Heart right ventricle (tissue), 16 donors: ENCODE measurements at regions of chr10 and their contacts with region 1.

Region 1: DNA sequence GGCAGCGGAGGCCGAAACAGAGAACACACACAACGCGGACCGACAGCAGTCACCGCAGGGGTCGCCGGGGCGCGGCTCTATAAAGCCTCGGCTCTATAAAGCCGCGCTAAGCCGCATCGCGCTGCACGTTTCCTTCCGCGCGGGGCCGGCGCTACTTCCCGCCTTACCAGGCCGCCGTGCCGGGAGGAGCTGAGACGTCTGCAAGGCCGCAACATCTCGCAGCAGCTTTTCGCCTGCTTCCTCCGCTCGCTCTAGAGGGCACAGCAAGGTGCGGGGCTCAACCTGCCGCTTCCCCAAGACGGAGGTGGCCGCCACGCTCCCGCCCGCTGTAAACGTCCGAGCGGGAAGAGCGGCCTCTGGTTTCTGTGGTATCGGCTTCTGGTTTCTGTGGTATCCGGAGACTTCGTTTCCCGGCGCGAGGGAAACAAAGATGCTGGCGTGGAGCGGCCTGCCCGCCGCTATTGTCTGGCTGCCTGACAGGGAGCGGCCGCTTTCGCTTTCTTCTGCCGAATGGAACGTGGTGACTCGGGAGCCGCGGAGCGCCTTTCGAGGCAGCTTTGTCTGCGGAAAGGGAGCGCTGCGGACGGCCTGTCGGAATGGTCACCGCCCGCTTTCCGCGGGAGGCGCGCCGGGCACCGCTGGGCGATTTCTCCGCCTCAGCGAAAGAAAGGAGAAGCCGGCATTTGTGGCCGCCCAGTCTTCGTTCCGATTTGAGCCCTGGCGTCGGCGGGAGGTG is 91.8 kb downstream of the SPAG6 start:
- DNase-seq: peak; percentile 92 to 93
- ATAC-seq: peak; percentile 94 to 98 (median 97)
- H3K4me3 ChIP-seq: peak overlapping the region; percentile 65 to 88 (median 78)
- H3K27ac ChIP-seq: peak overlapping the region; percentile 91 to 98 (median 95)
- H3K4me1 ChIP-seq: peaks cover 0 to 29% (median 20%) of the 10 kb centered on the region in 9 donors
- H3K27me3 ChIP-seq: peaks cover 0 to 15% (median 0%) of the 10 kb centered on the region in 7 donors
- CTCF ChIP-seq: peak in 5 of 9 donors; percentile 3 to 49 (median 22)

Region 2: DNA sequence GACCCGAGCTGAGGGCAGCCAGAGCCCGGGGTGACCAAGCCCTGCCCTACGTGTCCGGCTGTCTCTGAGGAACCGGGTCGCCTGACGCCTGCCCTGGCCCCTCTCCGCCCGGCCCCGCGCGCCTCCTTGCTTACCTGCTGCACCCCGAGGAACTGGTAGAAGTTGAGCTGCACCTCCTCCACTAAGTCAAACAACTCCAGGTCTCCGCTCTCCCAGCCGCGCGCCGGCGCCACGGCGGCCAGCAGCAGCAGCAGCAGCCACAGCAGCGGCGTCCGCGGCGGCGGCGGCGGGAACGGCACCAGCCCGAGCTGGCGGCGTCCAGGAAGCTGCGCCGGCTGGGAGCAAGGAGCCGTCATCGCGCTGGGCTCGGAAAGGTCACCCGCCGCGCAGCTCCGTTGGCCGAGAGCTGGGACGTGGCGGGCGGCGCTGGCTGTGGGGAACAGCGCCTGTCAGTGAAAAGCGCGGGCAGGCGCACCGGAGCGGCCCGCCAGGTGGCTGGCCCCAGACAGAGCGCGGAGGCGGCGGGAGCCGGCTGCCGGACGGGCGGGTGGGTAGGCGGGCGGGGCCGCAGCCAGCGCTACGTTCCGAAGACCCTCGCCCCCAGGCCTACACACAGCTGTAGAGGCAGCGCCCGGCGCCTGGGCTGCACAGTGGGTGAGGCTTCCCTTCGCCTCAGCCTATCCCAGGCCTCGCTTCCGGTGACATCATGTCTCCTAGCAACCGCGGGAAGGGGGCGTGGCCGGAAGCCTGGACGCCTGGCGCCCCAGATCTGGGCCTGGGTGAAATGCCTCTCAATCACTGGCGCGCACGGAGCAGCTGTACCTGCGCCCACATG is 433.8 kb before region 1 on chr10 and contains the start of gene DNAJC1:
- intact Hi-C with region 1: loop called in 7 of 10 experiments (anchors 10 kb)
- DNase-seq: peak; percentile 98 to 99
- ATAC-seq: peak; percentile 99 to 100 (median 100)
- H3K4me3 ChIP-seq: peak within 1 kb of the TSS; percentile 52 to 94 (median 80)
- H3K27ac ChIP-seq: peak within 1 kb of the TSS; percentile 72 to 98 (median 94)
- H3K4me1 ChIP-seq: peaks cover 0 to 28% (median 16%) of the 10 kb centered on the region in 9 donors
- H3K27me3 ChIP-seq: no peaks in the 10 kb centered on the region
- CTCF ChIP-seq: peak in 4 of 9 donors; percentile 5 to 21 (median 11)
- total RNA-seq, gene DNAJC1: 8.9 to 18.1 (median 11.4) TPM

Region 3: GRCh38 chr10:22316285-22317120 is 120.5 kb before region 1 on chr10 and contains the start of gene COMMD3:
- intact Hi-C with region 1: loop called in 1 of 10 experiments (anchors 2 kb)
- DNase-seq: peak; percentile 89 to 91
- ATAC-seq: peak; percentile 91 to 96 (median 93)
- H3K4me3 ChIP-seq: peak within 1 kb of the TSS; percentile 83 to 96 (median 90)
- H3K27ac ChIP-seq: peak within 1 kb of the TSS; percentile 85 to 96 (median 94)
- H3K4me1 ChIP-seq: peaks cover 0 to 44% (median 35%) of the 10 kb centered on the region in 9 donors
- H3K27me3 ChIP-seq: no peaks in the 10 kb centered on the region
- CTCF ChIP-seq: no peak
- total RNA-seq, gene COMMD3: 72.7 to 95.0 (median 80.6) TPM

Region 4: DNA sequence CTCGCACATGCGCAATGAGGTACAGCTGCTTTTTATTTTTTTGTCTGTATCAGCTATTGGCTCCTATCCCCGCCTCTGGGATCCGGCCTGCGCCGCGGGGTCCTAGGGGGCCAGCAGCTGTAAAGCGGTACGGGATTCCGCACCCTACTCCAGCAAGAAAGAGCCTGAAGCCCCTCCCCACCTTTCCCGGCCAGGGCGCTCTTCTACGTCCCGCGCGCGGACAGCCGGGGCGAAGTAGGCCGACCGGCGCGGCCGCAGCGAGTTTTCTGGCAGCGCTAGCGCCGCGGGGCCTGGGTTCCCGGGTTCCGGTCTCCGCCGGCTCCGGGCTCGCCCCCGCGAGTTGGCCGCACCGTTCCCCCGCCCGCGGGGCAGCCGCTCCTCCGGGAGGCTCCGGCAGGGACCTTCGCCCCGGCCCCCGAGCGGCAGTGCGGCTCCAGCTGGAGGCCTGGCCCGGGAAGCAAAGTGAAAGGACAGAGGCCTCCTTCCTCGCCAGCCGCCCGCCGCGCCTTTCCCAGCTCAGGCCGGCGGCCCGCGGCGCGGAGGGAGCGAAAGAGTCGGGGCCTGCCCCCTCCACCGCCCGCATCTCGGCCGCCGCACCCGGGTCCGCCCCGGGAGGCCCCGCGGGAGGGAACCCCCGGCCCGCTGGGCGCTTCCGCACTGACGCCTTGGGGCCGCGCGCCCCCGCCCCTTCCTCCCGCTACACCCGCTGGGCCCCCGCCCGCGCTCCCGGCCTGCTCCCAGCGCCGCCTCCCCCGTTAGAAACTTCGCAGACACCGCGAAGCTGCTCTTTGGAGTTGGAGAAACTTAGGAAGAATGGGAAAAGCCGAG is 96.5 kb before region 1 on chr10:
- intact Hi-C with region 1: loop called in 5 of 10 experiments (anchors 5 to 10 kb)
- DNase-seq: peak; percentile 66 to 72
- ATAC-seq: peak; percentile 84 to 92 (median 87)
- H3K4me3 ChIP-seq: peak overlapping the region; percentile 70 to 90 (median 82)
- H3K27ac ChIP-seq: peak overlapping the region; percentile 81 to 97 (median 95)
- H3K4me1 ChIP-seq: peaks cover 0 to 41% (median 25%) of the 10 kb centered on the region in 9 donors
- H3K27me3 ChIP-seq: peaks cover 24 to 94% (median 87%) of the 10 kb centered on the region in 7 donors
- CTCF ChIP-seq: peak in 1 of 9 donors; percentile 5

Region 5: GRCh38 chr10:22560913-22561239 is 123.8 kb after region 1 on chr10:
- intact Hi-C with region 1: loop called in 2 of 10 experiments (anchors 10 kb)
- DNase-seq: no peak
- ATAC-seq: no peak
- H3K4me3 ChIP-seq: no peak overlapping the region
- H3K27ac ChIP-seq: no peak overlapping the region
- H3K4me1 ChIP-seq: no peaks in the 10 kb centered on the region
- H3K27me3 ChIP-seq: no peaks in the 10 kb centered on the region
- CTCF ChIP-seq: no peak